PC-3 (cell line): ENCODE measurements at regions of chr17 and their contacts with region 1.

Region 1: GRCh38 chr17:63611354-63611753 is 10.7 kb downstream of the TACO1 start:
- DNase-seq: no peak
- ATAC-seq: no peak
- H3K4me3 ChIP-seq: no peak overlapping the region
- H3K27ac ChIP-seq: no peak overlapping the region
- H3K4me1 ChIP-seq: peaks cover 4% of the 10 kb centered on the region
- H3K27me3 ChIP-seq: no peaks in the 10 kb centered on the region
- CTCF ChIP-seq: no peak

Region 2: GRCh38 chr17:63425482-63425881 is 185.9 kb before region 1 on chr17:
- CTCF ChIA-PET with region 1: interaction called, 25 read pairs
- POLR2A ChIA-PET with region 1: interaction called, 5 read pairs
- intact Hi-C with region 1: loop called (anchors 1 kb)
- DNase-seq: peak; percentile 96
- ATAC-seq: peak; percentile 77
- H3K4me3 ChIP-seq: no peak overlapping the region
- H3K27ac ChIP-seq: no peak overlapping the region
- H3K4me1 ChIP-seq: peaks cover 20% of the 10 kb centered on the region
- H3K27me3 ChIP-seq: no peaks in the 10 kb centered on the region
- CTCF ChIP-seq: peak; percentile 98

Region 3: GRCh38 chr17:63478791-63479494 is 132.4 kb before region 1 on chr17:
- CTCF ChIA-PET with region 1: interaction called, 3 read pairs
- POLR2A ChIA-PET with region 1: no interaction called
- intact Hi-C with region 1: loop called (anchors 1 kb)
- DNase-seq: peak; percentile 97
- ATAC-seq: peak; percentile 82
- H3K4me3 ChIP-seq: no peak overlapping the region
- H3K27ac ChIP-seq: no peak overlapping the region
- H3K4me1 ChIP-seq: peaks cover 20% of the 10 kb centered on the region
- H3K27me3 ChIP-seq: no peaks in the 10 kb centered on the region
- CTCF ChIP-seq: peak; percentile 97

Region 4: GRCh38 chr17:63549946-63550807 is 61.2 kb before region 1 on chr17 and contains the start of gene DCAF7:
- CTCF ChIA-PET with region 1: interaction called, 4 read pairs
- POLR2A ChIA-PET with region 1: no interaction called
- intact Hi-C with region 1: loop called (anchors 2 kb)
- DNase-seq: peak; percentile 100
- ATAC-seq: peak; percentile 91
- H3K4me3 ChIP-seq: peak within 1 kb of the TSS; percentile 89
- H3K27ac ChIP-seq: peak within 1 kb of the TSS; percentile 65
- H3K4me1 ChIP-seq: peaks cover 22% of the 10 kb centered on the region
- H3K27me3 ChIP-seq: no peaks in the 10 kb centered on the region
- CTCF ChIP-seq: no peak
- total RNA-seq, gene DCAF7: 46.5 and 55.5 TPM in 2 replicates

Region 5: GRCh38 chr17:63600569-63601438 is 10.6 kb before region 1 on chr17 and contains the start of gene TACO1:
- CTCF ChIA-PET with region 1: interaction called, 12 read pairs
- POLR2A ChIA-PET with region 1: no interaction called
- intact Hi-C with region 1: no loop called
- DNase-seq: peak; percentile 92
- ATAC-seq: peak; percentile 94
- H3K4me3 ChIP-seq: peak within 1 kb of the TSS; percentile 91
- H3K27ac ChIP-seq: peak within 1 kb of the TSS; percentile 40
- H3K4me1 ChIP-seq: peaks cover 16% of the 10 kb centered on the region
- H3K27me3 ChIP-seq: no peaks in the 10 kb centered on the region
- CTCF ChIP-seq: no peak
- total RNA-seq, gene TACO1: 47.9 and 70.0 TPM in 2 replicates

Region 6: GRCh38 chr17:63621766-63622519 is 10.6 kb after region 1 on chr17 and contains the start of gene MAP3K3:
- CTCF ChIA-PET with region 1: interaction called, 16 read pairs
- POLR2A ChIA-PET with region 1: no interaction called
- intact Hi-C with region 1: no loop called
- DNase-seq: peak; percentile 100
- ATAC-seq: peak; percentile 86
- H3K4me3 ChIP-seq: peak within 1 kb of the TSS; percentile 82
- H3K27ac ChIP-seq: peak within 1 kb of the TSS; percentile 11; the same call in 1 of the 2 replicates
- H3K4me1 ChIP-seq: peaks cover 26% of the 10 kb centered on the region
- H3K27me3 ChIP-seq: no peaks in the 10 kb centered on the region
- CTCF ChIP-seq: no peak; the same call in 1 of the 2 replicates
- total RNA-seq, gene MAP3K3: 27.1 and 36.1 TPM in 2 replicates

Region 7: DNA sequence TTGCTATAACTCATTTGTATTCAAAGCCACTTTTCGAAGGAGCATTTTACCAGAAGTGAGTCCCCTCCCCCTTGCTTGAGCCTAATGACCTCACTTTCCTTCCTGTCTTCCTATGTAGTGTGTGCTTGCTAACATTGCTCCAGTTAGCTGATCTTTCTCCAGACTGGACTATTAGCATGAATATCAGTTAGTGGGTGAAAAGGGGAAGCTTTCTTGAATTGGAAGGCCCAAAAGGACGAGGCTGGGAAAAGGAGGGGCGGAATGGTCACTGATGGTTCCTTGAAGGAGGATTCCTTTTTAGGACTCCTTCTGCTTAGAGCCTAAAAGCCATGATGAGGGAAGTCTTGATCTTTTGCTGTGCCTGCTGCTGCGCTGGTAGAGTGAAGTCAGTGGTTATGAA is 22.8 kb after region 1 on chr17:
- CTCF ChIA-PET with region 1: no interaction called
- POLR2A ChIA-PET with region 1: no interaction called
- intact Hi-C with region 1: no loop called
- DNase-seq: no peak
- ATAC-seq: no peak
- H3K4me3 ChIP-seq: no peak overlapping the region
- H3K27ac ChIP-seq: no peak overlapping the region
- H3K4me1 ChIP-seq: no peaks in the 10 kb centered on the region
- H3K27me3 ChIP-seq: no peaks in the 10 kb centered on the region
- CTCF ChIP-seq: no peak